T-cell (primary cell): ENCODE measurements at regions of chr10 and their contacts with region 1.

Region 1: DNA sequence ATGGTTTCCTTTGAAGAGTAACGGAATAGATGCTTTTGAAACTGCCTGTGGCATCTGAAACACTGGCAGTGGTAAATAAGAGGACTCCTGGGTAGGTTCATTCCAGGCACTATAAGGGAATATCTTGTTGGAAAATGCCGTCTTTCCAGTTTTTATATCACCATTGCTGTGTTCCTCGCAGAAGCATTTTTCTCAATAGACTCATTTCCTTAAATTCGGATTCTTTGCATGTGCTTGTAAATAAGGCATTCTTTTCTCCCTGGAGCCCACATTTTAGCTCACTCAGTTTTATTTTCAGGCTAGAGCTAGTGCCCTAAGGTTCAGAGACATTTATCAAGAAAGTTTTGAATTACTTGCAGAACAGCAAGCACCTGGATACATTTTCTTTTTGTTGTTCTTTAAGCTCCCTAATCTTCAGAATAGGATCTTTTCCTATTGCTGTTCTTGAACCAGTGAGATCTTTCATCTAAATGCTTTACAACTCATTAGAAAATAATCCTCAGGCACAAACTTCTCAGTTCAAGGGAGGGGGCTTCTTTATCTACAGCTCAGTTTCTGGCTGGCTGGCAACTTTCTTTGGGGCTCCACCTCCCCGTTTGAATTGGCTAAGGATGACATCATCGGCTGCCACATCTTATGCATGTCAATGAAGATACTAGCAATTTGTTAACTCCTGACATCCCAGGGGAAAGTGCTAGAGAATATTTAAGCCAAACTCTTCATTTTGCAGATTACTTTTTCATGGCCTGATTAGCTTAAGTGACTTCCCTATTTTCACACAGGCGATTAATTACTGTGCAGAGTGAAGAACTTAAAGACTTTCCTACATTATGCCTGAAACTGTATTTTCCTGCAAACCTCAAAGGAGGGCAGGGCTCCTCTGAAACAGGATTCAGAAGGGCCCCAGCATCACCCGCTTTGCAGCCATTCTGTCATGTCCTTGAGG is 133.7 kb upstream of the RSU1 start:
- DNase-seq: peak in 5 of 35 experiments; percentile 6 to 31 (median 12)
- ATAC-seq: peak in 1 of 4 experiments; percentile 56
- H3K4me3 ChIP-seq: no peak overlapping the region
- H3K4me3 Mint-ChIP-seq: no peak overlapping the region
- H3K27ac ChIP-seq: no peak overlapping the region
- H3K27ac Mint-ChIP-seq: no peak overlapping the region
- H3K4me1 ChIP-seq: peaks cover 0 to 5% of the 10 kb centered on the region in 2 experiments
- H3K4me1 Mint-ChIP-seq: peaks cover 12 to 32% (median 18%) of the 10 kb centered on the region in 3 donors
- H3K27me3 ChIP-seq: no peaks in the 10 kb centered on the region
- H3K27me3 Mint-ChIP-seq: no peaks in the 10 kb centered on the region

Region 2: DNA sequence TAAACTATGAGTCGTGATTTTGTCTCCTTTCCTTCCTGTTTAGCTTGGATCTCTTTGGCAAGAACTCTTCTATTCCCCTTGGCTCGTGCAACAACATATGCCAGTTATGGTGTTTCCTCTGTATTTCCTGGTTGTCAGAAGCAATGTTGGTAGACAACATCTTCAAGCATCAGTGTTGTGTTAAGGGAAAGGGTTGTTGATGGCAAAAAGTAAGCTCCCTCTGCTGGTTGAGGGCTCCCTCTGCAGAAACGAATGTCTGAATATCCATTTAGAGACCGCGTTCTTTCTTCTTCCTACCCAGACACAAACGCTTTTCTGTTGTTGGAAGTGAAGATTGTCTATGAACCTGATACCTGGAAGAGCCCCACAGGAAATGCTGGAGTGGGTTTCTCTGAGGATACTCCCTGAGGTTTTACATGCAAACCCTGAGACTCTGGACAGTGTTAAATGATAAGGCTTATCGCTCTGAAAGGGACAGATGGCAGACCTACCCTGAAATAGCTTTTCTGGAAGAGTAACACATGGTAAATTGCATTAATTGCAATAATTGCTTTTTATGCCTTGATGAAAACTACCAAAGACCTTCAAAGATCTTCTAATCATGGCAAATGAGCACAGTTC is 405.7 kb before region 1 on chr10:
- CTCF ChIA-PET with region 1: no interaction called
- POLR2A ChIA-PET with region 1: no interaction called
- DNase-seq: peak in 1 of 35 experiments; percentile 34
- ATAC-seq: no peak
- H3K4me3 ChIP-seq: no peak overlapping the region
- H3K4me3 Mint-ChIP-seq: no peak overlapping the region
- H3K27ac ChIP-seq: no peak overlapping the region
- H3K27ac Mint-ChIP-seq: no peak overlapping the region
- H3K4me1 ChIP-seq: no peaks in the 10 kb centered on the region
- H3K4me1 Mint-ChIP-seq: peaks cover 0 to 4% (median 1%) of the 10 kb centered on the region in 3 donors
- H3K27me3 ChIP-seq: peaks cover 2 to 6% of the 10 kb centered on the region in 2 experiments
- H3K27me3 Mint-ChIP-seq: peaks cover 19 to 25% of the 10 kb centered on the region in 2 donors

Region 3: GRCh38 chr10:17200912-17201793 is 250.2 kb after region 1 on chr10 and contains the start of gene TRDMT1:
- CTCF ChIA-PET with region 1: no interaction called
- POLR2A ChIA-PET with region 1: interaction called in 1 of 2 experiments, 20 read pairs
- DNase-seq: peak; percentile 47 to 84 (median 66)
- ATAC-seq: peak; percentile 81 to 92 (median 90)
- H3K4me3 ChIP-seq: peak within 1 kb of the TSS; percentile 90 to 95
- H3K4me3 Mint-ChIP-seq: peak within 1 kb of the TSS; percentile 88 to 97 (median 91)
- H3K27ac ChIP-seq: peak within 1 kb of the TSS; percentile 89
- H3K27ac Mint-ChIP-seq: peak within 1 kb of the TSS; percentile 90 to 97
- H3K4me1 ChIP-seq: peaks cover 12 to 21% of the 10 kb centered on the region in 2 experiments
- H3K4me1 Mint-ChIP-seq: peaks cover 31 to 60% (median 53%) of the 10 kb centered on the region in 3 donors
- H3K27me3 ChIP-seq: no peaks in the 10 kb centered on the region
- H3K27me3 Mint-ChIP-seq: no peaks in the 10 kb centered on the region
- total RNA-seq, gene TRDMT1: 14.1 to 22.6 (median 20.5) TPM

Region 4: GRCh38 chr10:17430647-17431355 is 479.9 kb after region 1 on chr10:
- CTCF ChIA-PET with region 1: no interaction called
- POLR2A ChIA-PET with region 1: no interaction called
- DNase-seq: peak in 33 of 35 experiments; percentile 19 to 82 (median 57)
- ATAC-seq: no peak
- H3K4me3 ChIP-seq: no peak overlapping the region
- H3K4me3 Mint-ChIP-seq: peak overlapping the region in 2 of 3 donors; percentile 9 to 82
- H3K27ac ChIP-seq: no peak overlapping the region
- H3K27ac Mint-ChIP-seq: peak overlapping the region; percentile 5 to 51
- H3K4me1 ChIP-seq: peaks cover 41 to 44% of the 10 kb centered on the region in 2 experiments
- H3K4me1 Mint-ChIP-seq: peaks cover 53 to 58% (median 54%) of the 10 kb centered on the region in 3 donors
- H3K27me3 ChIP-seq: no peaks in the 10 kb centered on the region
- H3K27me3 Mint-ChIP-seq: peaks cover 5 to 6% of the 10 kb centered on the region in 2 donors

Region 5: GRCh38 chr10:18699849-18700840 is 1749.2 kb after region 1 on chr10:
- CTCF ChIA-PET with region 1: no interaction called
- POLR2A ChIA-PET with region 1: no interaction called
- DNase-seq: no peak
- ATAC-seq: no peak
- H3K4me3 ChIP-seq: no peak overlapping the region
- H3K4me3 Mint-ChIP-seq: no peak overlapping the region
- H3K27ac ChIP-seq: no peak overlapping the region
- H3K27ac Mint-ChIP-seq: no peak overlapping the region
- H3K4me1 ChIP-seq: no peaks in the 10 kb centered on the region
- H3K4me1 Mint-ChIP-seq: peaks cover 2 to 8% (median 7%) of the 10 kb centered on the region in 3 donors
- H3K27me3 ChIP-seq: no peaks in the 10 kb centered on the region
- H3K27me3 Mint-ChIP-seq: peaks cover 0 to 4% of the 10 kb centered on the region in 2 donors